ENCODE measurements at regions of chr12 and their contacts with region 1.

Region 1: DNA sequence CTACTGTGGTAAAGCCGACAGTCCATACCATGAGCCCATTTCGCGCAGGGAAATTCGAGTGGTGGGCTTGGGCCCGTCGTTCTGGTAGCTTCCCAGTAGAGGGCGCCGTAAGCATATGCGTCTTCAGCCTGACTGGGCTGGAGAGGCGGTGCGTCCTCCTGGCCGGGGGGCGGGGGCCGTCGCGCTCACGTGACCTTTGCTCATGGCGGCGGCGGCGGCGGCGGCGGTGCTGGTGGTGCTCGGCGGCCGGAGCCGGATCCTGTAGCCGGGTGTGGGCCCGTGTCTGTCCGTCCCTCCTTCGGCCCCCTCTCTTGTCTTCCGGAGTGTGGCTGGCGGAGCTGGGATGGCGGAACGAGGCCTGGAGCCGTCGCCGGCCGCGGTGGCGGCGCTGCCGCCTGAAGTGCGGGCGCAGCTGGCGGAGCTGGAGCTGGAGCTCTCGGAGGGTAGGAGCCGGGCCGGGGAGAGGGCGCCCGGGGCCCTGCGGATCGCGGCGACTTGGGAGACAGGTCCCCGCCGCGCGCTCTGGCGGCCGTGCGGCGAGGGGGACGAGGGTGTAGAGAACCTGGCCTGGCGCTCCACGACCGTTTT is at the start of gene DIP2B:
- DNase-seq: peak; percentile 50
- ATAC-seq: peak; percentile 87
- H3K4me3 ChIP-seq: peak within 1 kb of the TSS; percentile 96
- H3K27ac ChIP-seq: peak within 1 kb of the TSS; percentile 89
- H3K4me1 ChIP-seq: peaks cover 21% of the 10 kb centered on the region
- H3K27me3 ChIP-seq: no peaks in the 10 kb centered on the region
- CTCF ChIP-seq: peak; percentile 90 to 95 (median 93); a peak in 5 of 6 replicates
- EP300 ChIP-seq: no peak
- POLR2A ChIP-seq: peak; percentile 85
- RAD21 ChIP-seq: peak; percentile 96
- polyA plus RNA-seq, gene DIP2B: 4.5 to 4.6 TPM

Region 2: DNA sequence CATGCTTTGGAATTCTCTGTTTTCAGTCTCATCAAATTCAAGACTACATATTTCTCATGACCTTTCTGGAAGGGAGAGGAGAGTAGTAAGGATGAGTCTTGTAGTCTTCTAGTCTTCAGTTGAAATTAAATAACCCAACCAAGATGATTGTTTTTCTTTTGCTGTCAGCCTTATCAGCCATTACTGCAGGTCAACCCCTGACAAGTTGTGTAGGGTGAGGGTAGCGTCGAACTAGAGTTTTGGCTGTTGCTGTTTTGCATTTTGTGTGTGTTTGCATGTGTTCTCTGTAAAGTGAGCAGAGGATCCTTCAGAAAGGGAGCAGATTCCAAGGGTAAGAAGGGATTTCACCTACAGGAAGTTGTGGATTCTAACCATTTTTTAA is 28.3 kb after region 1 on chr12:
- CTCF ChIA-PET with region 1: interaction called, 10 read pairs
- POLR2A ChIA-PET with region 1: interaction called, 4 read pairs
- RAD21 ChIA-PET with region 1: interaction called, 56 read pairs
- SMC1A ChIA-PET with region 1: interaction called, 94 read pairs
- in situ Hi-C with region 1: no loop called
- intact Hi-C with region 1: no loop called
- DNase-seq: no peak
- ATAC-seq: peak; percentile 2
- H3K4me3 ChIP-seq: no peak overlapping the region; the same call in 1 of the 2 replicates
- H3K27ac ChIP-seq: peak overlapping the region; percentile 96
- H3K4me1 ChIP-seq: peaks cover 57% of the 10 kb centered on the region
- H3K27me3 ChIP-seq: no peaks in the 10 kb centered on the region
- CTCF ChIP-seq: no peak
- EP300 ChIP-seq: no peak
- POLR2A ChIP-seq: no peak
- RAD21 ChIP-seq: no peak

Region 3: DNA sequence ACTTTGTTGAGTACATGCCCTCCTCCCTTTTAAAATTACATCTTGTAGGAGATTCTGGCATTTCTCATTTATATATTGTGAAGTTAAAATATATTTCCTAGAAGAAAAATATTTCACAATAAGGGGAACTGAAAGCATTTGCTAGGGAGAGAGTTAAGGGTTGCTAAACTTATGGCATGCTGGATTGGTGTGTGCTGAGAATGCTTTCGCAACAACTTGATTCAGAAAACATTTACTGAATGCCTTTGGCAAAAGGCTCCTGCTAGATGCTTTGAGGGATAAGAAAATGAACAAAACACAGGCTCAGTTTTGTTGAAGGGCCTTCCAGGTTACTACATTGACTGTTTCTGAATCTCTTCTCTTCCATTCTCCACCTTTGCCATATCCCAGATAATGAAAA is 67.4 kb after region 1 on chr12:
- CTCF ChIA-PET with region 1: interaction called, 9 read pairs
- POLR2A ChIA-PET with region 1: no interaction called
- RAD21 ChIA-PET with region 1: interaction called, 4 read pairs
- SMC1A ChIA-PET with region 1: interaction called, 42 read pairs
- in situ Hi-C with region 1: no loop called
- intact Hi-C with region 1: no loop called
- DNase-seq: no peak
- ATAC-seq: peak; percentile 40; the same call in 1 of the 3 replicates
- H3K4me3 ChIP-seq: no peak overlapping the region
- H3K27ac ChIP-seq: no peak overlapping the region
- H3K4me1 ChIP-seq: peaks cover 19% of the 10 kb centered on the region
- H3K27me3 ChIP-seq: no peaks in the 10 kb centered on the region
- CTCF ChIP-seq: no peak
- EP300 ChIP-seq: no peak
- POLR2A ChIP-seq: no peak
- RAD21 ChIP-seq: no peak

Region 4: DNA sequence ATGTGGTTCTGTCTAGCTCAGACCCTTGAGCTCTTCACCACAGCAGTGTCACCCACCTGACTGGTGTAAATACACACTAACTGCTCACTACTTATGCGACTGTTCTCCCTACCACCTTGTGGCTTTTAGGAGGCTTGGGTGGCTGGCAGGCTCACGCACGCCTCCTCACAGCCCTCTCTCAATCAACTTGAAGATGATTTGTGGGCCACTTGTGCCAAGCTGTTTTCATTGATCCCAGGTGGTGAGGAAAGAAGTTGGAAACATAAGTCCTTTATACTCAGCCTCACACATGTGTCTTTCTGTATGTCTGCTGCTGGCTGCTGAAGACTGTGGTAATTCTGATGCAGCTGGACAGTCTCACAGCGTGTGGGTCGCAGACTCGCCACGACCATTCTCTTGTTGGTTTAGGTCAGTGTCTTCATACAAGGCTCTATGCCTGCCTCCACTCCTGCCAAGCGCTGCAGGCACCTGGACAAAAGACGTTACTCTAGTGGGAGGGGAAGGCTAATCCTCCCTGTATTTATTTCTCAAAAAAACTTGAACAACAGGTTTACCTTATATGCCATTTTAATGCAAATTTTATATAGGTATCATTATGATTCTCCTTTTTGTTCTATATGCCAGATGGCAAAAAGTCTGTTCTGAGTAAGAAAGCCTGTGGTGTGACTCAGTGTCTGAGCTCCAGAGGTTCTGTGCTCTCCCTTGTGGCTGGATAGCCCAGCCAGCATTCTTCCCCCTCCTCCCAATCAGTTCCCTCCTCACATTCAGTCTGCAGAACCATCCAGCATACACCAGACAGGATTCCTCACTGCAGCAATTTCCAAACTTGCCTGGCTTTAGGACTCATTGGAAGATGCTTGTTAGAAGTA is 115.5 kb after region 1 on chr12:
- CTCF ChIA-PET with region 1: interaction called, 5 read pairs
- POLR2A ChIA-PET with region 1: no interaction called
- RAD21 ChIA-PET with region 1: interaction called, 5 read pairs
- SMC1A ChIA-PET with region 1: interaction called, 21 read pairs
- in situ Hi-C with region 1: no loop called
- intact Hi-C with region 1: no loop called
- DNase-seq: no peak
- ATAC-seq: peak; percentile 55
- H3K4me3 ChIP-seq: no peak overlapping the region
- H3K27ac ChIP-seq: peak overlapping the region; percentile 25; the same call in 1 of the 2 replicates
- H3K4me1 ChIP-seq: peaks cover 15% of the 10 kb centered on the region
- H3K27me3 ChIP-seq: no peaks in the 10 kb centered on the region
- CTCF ChIP-seq: no peak
- EP300 ChIP-seq: no peak
- POLR2A ChIP-seq: no peak
- RAD21 ChIP-seq: no peak

Region 5: GRCh38 chr12:50734409-50735263 is 229.7 kb after region 1 on chr12:
- CTCF ChIA-PET with region 1: interaction called, 4 read pairs
- POLR2A ChIA-PET with region 1: interaction called, 3 read pairs
- RAD21 ChIA-PET with region 1: interaction called, 3 read pairs
- SMC1A ChIA-PET with region 1: interaction called, 3 read pairs
- in situ Hi-C with region 1: no loop called
- intact Hi-C with region 1: loop called (anchors 2 kb)
- DNase-seq: no peak
- ATAC-seq: peak; percentile 76
- H3K4me3 ChIP-seq: no peak overlapping the region
- H3K27ac ChIP-seq: no peak overlapping the region
- H3K4me1 ChIP-seq: no peaks in the 10 kb centered on the region
- H3K27me3 ChIP-seq: no peaks in the 10 kb centered on the region
- CTCF ChIP-seq: peak; percentile 58 to 64 (median 63)
- EP300 ChIP-seq: no peak
- POLR2A ChIP-seq: no peak
- RAD21 ChIP-seq: peak; percentile 65

Region 6: DNA sequence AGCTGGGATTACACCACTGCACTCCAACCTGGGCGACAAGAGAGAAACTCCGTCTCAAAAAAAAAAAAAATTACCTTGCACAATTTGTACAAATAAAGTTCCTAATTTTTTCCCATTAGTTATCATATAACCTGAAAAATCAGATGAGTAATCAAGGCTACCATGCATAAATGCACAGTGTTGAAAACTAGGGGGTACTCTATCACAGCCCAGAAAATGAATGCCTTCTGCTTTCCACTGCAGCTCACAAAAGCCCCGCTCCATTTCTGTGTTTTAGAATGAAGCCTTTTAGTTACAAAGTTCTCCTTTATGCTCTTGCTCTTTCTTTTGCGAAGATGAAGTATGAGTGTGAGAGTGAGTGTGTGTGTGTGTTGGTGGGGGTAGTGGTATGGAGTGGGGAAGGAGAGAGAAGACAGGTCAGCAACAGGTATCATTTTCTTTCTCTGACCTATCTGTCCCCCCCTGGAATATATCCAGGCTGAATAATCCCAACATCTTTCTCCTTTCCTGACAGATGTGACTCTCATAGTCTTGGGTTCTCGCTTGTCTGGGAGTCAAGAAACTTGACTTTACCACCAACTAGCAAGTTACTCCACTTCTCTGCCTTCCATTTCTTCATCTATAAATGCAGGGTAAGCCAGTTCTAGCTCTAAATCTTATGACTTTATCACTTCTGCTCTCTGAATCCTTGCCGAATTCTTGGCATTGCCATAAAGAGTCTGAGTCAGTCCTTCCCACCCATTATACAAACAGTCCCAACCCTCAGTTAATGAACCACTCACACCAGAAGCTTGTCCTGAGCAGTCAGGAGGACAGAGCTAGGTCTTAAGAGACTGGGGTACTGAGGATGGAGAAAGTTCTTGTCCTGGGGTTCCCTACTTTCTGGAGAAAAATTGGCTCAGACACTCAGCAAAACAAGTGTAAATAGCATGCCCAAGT is 803.0 kb after region 1 on chr12:
- CTCF ChIA-PET with region 1: no interaction called
- POLR2A ChIA-PET with region 1: no interaction called
- RAD21 ChIA-PET with region 1: no interaction called
- SMC1A ChIA-PET with region 1: no interaction called
- in situ Hi-C with region 1: no loop called
- intact Hi-C with region 1: no loop called
- DNase-seq: no peak
- ATAC-seq: no peak
- H3K4me3 ChIP-seq: no peak overlapping the region
- H3K27ac ChIP-seq: no peak overlapping the region
- H3K4me1 ChIP-seq: peaks cover 11% of the 10 kb centered on the region
- H3K27me3 ChIP-seq: no peaks in the 10 kb centered on the region
- CTCF ChIP-seq: no peak
- EP300 ChIP-seq: no peak
- POLR2A ChIP-seq: no peak
- RAD21 ChIP-seq: no peak

Measured in GM12878 (cell line).